Right ventricle myocardium superior (tissue), 1 donor: ENCODE measurements at regions of chr21 and their contacts with region 1.

Region 1: GRCh38 chr21:44939532-44940115 is at the start of gene SLX9:
- DNase-seq: peak; percentile 85
- ATAC-seq: peak; percentile 94
- total RNA-seq, gene SLX9: 77.4 TPM

Region 2: DNA sequence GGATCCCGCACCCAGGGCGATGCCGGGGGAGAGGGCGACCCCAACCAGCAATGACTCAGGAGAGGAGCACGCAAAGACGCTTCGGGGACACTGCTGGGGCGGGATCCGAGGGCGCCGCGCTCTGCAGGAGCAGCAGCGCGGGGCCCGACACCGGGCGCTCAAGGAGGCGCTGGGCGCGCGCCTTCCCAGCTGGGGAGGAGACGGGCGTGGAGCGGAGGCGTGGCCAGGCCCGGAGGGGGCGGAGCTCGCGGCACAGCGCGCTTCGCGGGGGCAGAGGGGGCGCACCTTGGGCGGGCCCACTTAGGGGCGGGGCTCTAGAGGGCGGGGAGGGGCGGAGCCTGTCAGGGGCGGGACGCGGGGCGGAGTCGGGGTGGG is 122.1 kb before region 1 on chr21:
- intact Hi-C with region 1: loop called (anchors 5 kb)
- DNase-seq: peak; percentile 94
- ATAC-seq: peak; percentile 93

Region 3: GRCh38 chr21:45179568-45180245 is 240.1 kb after region 1 on chr21:
- intact Hi-C with region 1: no loop called
- DNase-seq: no peak
- ATAC-seq: no peak